Activated CD4-positive, alpha-beta T cell treated with anti-CD3 and anti-CD28 coated beads for 36 hours (primary cell): ENCODE measurements at regions of chr3 and their contacts with region 1.

Region 1: GRCh38 chr3:113546414-113546893 is 14.1 kb downstream of the SIDT1 start:
- DNase-seq: no peak
- ATAC-seq: peak; percentile 47
- H3K4me3 Mint-ChIP-seq: peak overlapping the region; percentile 69
- H3K27ac Mint-ChIP-seq: peak overlapping the region; percentile 82
- H3K4me1 Mint-ChIP-seq: peaks cover 42% of the 10 kb centered on the region
- H3K27me3 Mint-ChIP-seq: no peaks in the 10 kb centered on the region

Region 2: GRCh38 chr3:112847692-112848091 is 698.8 kb before region 1 on chr3:
- CTCF ChIA-PET with region 1: no interaction called
- POLR2A ChIA-PET with region 1: no interaction called
- intact Hi-C with region 1: no loop called
- DNase-seq: peak; percentile 29
- ATAC-seq: peak; percentile 51
- H3K4me3 Mint-ChIP-seq: no peak overlapping the region
- H3K27ac Mint-ChIP-seq: peak overlapping the region; percentile 22
- H3K4me1 Mint-ChIP-seq: peaks cover 18% of the 10 kb centered on the region
- H3K27me3 Mint-ChIP-seq: no peaks in the 10 kb centered on the region

Region 3: DNA sequence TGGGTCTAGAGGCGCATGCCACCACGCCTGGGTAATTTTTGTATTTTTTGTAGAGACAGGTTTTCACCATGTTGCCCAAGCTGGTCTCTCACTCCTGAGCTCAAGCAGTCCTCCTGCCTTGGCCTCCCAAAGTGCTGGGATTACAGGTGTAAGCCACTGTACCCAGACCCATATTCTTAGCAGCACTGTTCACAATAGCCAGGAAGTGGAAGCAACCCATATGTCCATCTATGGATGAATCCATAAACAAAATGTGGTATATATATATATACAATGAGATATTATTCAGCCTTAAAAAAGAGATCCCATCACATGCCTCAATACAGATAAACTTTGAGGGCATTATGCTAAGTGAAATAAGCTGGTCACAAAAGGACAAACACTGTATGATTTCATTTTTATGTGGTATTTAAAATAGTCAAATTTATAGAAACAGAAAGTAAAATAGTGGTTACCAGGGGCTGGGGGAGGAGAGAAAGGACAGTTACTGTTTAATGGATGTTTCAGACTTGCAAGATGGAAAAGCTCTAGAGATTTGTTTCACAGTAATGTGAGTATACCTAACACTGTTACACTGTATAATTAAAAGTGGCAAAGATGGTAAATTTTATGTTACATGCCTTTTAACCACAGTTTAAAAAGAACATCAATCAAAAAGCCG is 256.5 kb after region 1 on chr3:
- CTCF ChIA-PET with region 1: no interaction called
- POLR2A ChIA-PET with region 1: interaction called, 13 read pairs
- intact Hi-C with region 1: no loop called
- DNase-seq: no peak
- ATAC-seq: no peak
- H3K4me3 Mint-ChIP-seq: no peak overlapping the region
- H3K27ac Mint-ChIP-seq: no peak overlapping the region
- H3K4me1 Mint-ChIP-seq: peaks cover 5% of the 10 kb centered on the region
- H3K27me3 Mint-ChIP-seq: no peaks in the 10 kb centered on the region